ENCODE measurements at regions of chr17 and their contacts with region 1.

Region 1: DNA sequence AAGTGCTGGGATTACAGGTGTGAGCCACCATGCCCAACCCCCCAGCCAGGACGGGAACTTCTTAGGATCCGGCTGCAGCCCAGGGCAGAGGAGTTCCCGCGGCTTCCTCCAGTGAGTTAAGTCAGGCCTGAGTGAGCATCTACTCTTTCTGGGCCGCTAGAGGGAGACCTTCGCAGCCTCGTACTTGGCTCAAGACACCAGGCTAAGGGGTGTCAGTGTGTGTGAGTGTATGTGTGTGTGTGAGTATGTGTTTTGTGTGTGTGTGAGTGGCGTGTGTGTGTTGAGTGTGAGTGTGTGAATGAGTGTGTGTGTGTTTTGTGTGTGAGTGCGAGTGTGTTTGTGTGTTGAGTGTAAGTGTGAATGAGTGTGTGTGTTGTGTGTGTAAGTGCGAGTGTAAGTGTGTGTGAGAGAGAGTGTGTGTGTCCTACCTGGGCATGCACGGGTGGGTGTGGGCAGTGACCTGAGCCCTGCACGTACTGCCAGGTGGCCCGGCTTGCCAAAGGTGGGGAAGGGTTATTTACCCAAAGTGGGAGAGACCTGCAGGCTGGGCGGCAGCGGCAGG is 58.5 kb downstream of the TMEM235 start:
- DNase-seq: peak; percentile 49 to 90 (median 73)
- ATAC-seq: peak; percentile 97 to 99 (median 99)
- H3K4me3 ChIP-seq: no peak overlapping the region
- H3K4me3 Mint-ChIP-seq: no peak overlapping the region
- H3K27ac ChIP-seq: no peak overlapping the region
- H3K27ac Mint-ChIP-seq: no peak overlapping the region
- H3K4me1 ChIP-seq: peaks cover 0 to 16% of the 10 kb centered on the region in 2 experiments
- H3K4me1 Mint-ChIP-seq: peaks cover 0 to 2% (median 2%) of the 10 kb centered on the region in 3 donors
- H3K27me3 ChIP-seq: peaks cover 0 to 3% of the 10 kb centered on the region in 2 experiments
- H3K27me3 Mint-ChIP-seq: no peaks in the 10 kb centered on the region

Region 2: DNA sequence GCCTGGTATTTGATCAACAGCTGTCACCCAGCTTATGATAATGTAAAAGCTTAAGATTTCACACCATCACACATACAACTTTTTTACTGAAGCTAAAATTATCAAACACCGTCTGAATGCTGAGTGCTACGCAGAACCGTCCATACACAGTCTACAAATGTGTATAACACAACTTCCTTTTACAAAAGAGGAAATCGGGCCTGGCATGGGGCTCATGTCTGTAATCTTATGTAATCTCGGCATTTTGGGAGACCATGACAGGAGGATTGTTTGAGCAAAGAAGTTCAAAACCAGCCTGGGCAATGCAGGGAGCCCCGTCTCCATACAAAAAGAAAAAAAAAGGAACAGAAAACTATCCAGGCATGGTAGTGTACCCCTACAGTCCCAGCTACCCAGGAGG is 1962.2 kb before region 1 on chr17:
- CTCF ChIA-PET with region 1: no interaction called
- POLR2A ChIA-PET with region 1: interaction called in 1 of 2 experiments, 14 read pairs
- DNase-seq: no peak
- ATAC-seq: no peak
- H3K4me3 ChIP-seq: no peak overlapping the region
- H3K4me3 Mint-ChIP-seq: no peak overlapping the region
- H3K27ac ChIP-seq: no peak overlapping the region
- H3K27ac Mint-ChIP-seq: no peak overlapping the region
- H3K4me1 ChIP-seq: no peaks in the 10 kb centered on the region
- H3K4me1 Mint-ChIP-seq: no peaks in the 10 kb centered on the region
- H3K27me3 ChIP-seq: no peaks in the 10 kb centered on the region
- H3K27me3 Mint-ChIP-seq: no peaks in the 10 kb centered on the region

Region 3: DNA sequence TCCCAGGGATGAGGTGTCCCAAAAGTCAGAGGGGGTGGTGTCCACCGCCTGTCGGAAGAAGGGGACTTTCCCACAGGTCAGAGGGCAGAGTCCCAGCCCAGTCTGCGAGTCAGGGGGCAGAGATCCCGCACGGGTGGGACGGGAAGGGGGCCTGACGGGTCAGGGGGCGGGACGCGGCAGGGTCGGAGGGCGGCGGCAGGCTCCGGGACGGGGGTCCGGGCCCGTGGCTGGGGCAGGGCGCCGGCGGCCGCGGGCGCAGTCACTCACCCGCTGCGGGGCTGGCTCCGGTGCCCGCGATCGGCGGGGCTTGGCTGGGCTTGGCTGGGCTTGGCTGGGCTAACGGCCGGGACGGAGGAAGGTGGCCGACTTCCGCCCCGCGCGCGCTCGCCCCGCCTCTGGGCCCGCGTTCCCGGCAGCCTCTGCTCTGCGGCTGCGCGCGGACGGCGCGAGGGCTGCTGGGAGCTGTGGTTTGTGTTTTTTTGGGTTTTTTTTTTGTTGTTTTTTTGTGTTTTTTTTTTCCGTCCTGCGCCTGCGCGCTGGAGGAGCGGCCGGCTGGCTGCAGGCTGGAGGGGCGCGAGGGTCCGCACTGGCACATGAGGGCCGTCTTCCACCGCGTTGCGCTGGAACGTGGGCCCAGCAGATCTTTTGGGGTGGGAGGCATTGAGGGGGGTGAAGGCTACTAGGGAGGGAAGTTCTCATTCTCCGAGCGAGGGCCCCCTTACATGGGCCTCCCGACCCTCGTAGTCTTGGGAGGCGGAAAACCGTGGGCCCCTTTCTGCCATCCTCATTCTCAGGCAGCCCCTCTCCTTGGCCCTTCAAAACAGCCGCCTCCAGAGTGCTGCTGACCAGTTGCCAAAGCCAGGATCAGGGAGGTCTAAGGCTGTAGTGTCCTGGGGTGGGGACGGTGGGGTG is 719.8 kb after region 1 on chr17 and contains the start of gene CANT1:
- CTCF ChIA-PET with region 1: no interaction called
- POLR2A ChIA-PET with region 1: no interaction called
- DNase-seq: peak; percentile 64 to 92 (median 79)
- ATAC-seq: peak; percentile 94 to 96 (median 96)
- H3K4me3 ChIP-seq: peak within 1 kb of the TSS; percentile 72 to 88
- H3K4me3 Mint-ChIP-seq: peak within 1 kb of the TSS; percentile 85 to 88 (median 87)
- H3K27ac ChIP-seq: peak within 1 kb of the TSS; percentile 77
- H3K27ac Mint-ChIP-seq: peak within 1 kb of the TSS; percentile 94 to 95
- H3K4me1 ChIP-seq: peaks cover 20 to 50% of the 10 kb centered on the region in 2 experiments
- H3K4me1 Mint-ChIP-seq: peaks cover 48 to 53% (median 49%) of the 10 kb centered on the region in 3 donors
- H3K27me3 ChIP-seq: no peaks in the 10 kb centered on the region
- H3K27me3 Mint-ChIP-seq: peaks cover 2 to 4% of the 10 kb centered on the region in 2 donors
- total RNA-seq, gene CANT1: 46.2 to 63.1 (median 57.7) TPM

Measured in T-cell (primary cell).